Activated CD4-positive, alpha-beta T cell treated with anti-CD3 and anti-CD28 coated beads, Interleukin-2, amount 10 ng/mL, durations not matched to agents 24 days and 14 days (primary cell): ENCODE measurements at regions of chr7 and their contacts with region 1.

Region 1: DNA sequence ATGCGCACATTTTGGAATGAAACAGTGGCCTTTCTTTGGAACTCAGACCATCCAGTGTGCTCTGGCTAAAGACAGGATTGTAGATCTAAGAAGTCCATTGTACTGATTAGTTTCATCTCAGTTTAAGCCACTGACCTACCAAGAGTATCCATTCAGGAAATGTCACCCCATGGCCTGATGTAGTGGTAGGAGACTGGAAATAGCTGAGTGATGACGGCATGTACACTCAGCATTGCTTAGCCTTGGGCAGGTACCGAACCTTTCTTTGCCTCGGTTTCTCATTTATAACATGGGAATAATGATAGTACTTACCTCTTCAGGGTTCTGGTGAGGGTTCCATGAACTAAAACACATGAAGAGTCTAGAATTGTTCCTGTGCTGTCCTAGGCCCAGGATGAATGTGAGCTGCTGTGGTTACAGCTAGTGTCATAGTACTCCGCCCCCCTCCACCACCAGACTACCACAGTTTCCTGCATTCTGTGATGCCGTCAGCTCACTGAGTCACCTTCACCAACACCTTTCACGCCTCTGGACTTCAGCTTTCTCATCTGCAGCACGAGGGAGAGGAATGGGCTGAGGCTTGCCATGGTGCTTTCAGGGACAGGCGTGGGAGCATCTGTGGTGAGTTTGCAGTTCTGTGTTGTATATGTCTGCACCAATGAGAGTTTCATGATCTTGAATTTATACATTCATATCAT is 484.0 kb upstream of the GALNT17 start:
- DNase-seq: peak; percentile 91
- H3K4me3 Mint-ChIP-seq: peak overlapping the region; percentile 50
- H3K27ac Mint-ChIP-seq: peak overlapping the region; percentile 78
- H3K4me1 Mint-ChIP-seq: peaks cover 13% of the 10 kb centered on the region
- H3K27me3 Mint-ChIP-seq: peaks cover 23% of the 10 kb centered on the region

Region 2: GRCh38 chr7:70316786-70317755 is 330.9 kb before region 1 on chr7:
- intact Hi-C with region 1: loop called (anchors 10 kb)
- DNase-seq: peak; percentile 79
- H3K4me3 Mint-ChIP-seq: peak overlapping the region; percentile 31
- H3K27ac Mint-ChIP-seq: peak overlapping the region; percentile 40
- H3K4me1 Mint-ChIP-seq: peaks cover 18% of the 10 kb centered on the region
- H3K27me3 Mint-ChIP-seq: no peaks in the 10 kb centered on the region

Region 3: DNA sequence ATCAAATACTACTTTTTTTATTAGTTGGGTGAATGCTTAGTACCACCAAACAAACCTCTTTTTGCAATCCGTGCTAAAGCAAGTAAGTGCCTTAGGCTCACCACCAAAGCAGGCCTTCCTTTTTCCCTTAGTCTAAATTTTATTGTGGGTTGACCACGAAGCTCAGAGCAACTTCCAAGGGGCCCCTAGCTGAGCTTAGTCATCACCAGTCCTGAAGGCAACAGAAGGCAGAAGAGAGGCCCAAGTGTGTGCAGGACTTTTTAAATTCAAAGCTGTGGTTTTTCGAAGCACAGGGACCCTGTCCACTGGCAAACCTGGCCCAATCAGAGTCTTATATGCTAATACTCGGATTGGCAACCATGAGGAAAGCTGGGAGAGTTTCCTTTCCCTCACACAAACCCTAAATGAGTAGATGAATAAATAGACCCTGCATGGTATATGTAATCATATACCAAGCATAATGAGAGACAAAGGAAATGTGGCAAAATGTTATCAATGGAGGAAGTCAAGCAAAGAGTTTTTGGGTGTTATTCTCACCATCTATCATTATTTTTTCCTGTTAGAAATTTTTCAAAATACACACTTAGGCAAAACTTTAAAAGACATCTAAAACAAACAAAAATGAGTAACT is 30.8 kb after region 1 on chr7:
- intact Hi-C with region 1: loop called (anchors 1 kb)
- DNase-seq: no peak
- H3K4me3 Mint-ChIP-seq: no peak overlapping the region
- H3K27ac Mint-ChIP-seq: no peak overlapping the region
- H3K4me1 Mint-ChIP-seq: peaks cover 20% of the 10 kb centered on the region
- H3K27me3 Mint-ChIP-seq: peaks cover 12% of the 10 kb centered on the region

Region 4: DNA sequence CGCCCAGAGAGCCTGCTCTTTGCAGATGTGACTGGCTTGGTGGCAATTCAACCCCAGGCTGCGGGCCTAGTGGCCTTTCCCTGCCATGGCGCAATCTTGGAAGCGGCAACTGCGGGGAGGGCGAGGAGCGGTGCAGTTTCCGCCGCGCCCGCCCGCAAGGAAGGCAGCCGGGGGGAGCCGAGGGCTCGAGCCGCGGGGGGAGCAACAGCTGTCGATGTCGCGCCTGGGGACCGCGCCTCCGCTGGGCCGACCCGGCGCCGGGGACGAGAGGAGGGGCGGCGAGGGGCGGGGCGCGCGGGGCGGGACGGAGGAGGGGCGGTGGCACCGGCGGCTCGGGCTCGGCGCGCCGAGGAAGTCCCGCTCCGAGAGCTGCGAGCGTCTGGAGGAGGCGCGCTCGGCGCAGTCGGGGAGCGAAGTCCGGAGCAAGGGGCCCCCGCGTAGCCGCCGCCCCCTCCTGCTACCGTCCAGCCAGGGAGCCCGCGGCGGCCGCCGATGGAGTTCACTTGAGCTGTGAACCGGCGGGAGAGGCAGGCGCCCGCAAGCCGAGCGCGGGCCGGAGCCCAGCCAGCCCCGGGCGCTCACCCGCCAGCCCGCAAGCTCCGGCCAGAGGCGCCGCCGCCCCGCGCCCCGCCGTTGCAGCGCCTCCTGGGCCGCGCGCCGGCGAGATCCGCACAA is 45.9 kb after region 1 on chr7:
- intact Hi-C with region 1: loop called (anchors 5 kb)
- DNase-seq: peak; percentile 73
- H3K4me3 Mint-ChIP-seq: peak overlapping the region; percentile 55
- H3K27ac Mint-ChIP-seq: no peak overlapping the region
- H3K4me1 Mint-ChIP-seq: peaks cover 4% of the 10 kb centered on the region
- H3K27me3 Mint-ChIP-seq: peaks cover 53% of the 10 kb centered on the region

Region 5: GRCh38 chr7:71457846-71458590 is 810.1 kb after region 1 on chr7:
- intact Hi-C with region 1: no loop called
- DNase-seq: no peak
- H3K4me3 Mint-ChIP-seq: no peak overlapping the region
- H3K27ac Mint-ChIP-seq: no peak overlapping the region
- H3K4me1 Mint-ChIP-seq: no peaks in the 10 kb centered on the region
- H3K27me3 Mint-ChIP-seq: no peaks in the 10 kb centered on the region